ENCODE measurements at regions of chr20 and their contacts with region 1.

Region 1: DNA sequence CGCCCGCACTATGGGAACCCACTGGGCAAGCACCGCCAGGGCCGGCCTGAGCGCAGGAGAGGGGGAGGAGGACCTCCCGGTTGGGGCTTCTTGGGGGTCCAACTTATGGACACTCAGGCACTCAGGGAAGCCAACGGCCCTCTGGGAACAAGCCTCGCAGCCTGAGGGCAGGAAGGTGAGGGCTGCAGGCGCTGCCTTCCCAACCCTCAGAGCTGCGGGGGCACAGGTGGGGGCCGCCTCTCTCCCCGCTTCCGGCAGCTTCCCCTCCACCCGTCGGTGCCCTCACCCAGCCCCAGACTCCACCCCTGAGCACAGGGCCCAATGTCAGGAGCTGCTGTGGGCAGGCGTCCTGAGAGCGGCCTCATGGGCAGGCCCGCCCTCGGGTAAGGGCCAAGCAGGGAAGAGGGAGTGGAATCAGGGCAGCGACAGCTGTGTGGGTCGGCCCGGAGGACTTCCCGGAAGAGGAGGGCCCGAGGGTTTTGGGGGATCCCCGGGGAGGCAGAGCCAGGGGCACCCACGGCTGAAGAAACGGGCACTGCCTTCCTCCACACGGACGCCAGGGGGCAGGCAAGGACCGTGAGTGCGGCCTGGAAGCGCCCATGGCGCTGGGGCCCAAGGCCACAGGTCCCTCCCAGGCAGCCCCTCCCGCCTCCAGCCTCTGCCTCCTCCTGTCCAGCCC is 488 bp upstream of the PTK6 start:
- DNase-seq: peak; percentile 90
- ATAC-seq: peak; percentile 93
- H3K4me3 ChIP-seq: peak overlapping the region; percentile 46 to 70
- H3K27ac ChIP-seq: peak overlapping the region; percentile 88
- H3K4me1 ChIP-seq: peaks cover 17% of the 10 kb centered on the region
- H3K27me3 ChIP-seq: no peaks in the 10 kb centered on the region
- CTCF ChIP-seq: peak; percentile 95

Region 2: GRCh38 chr20:63326897-63327745 is 210.5 kb before region 1 on chr20:
- CTCF ChIA-PET with region 1: no interaction called
- POLR2A ChIA-PET with region 1: no interaction called
- in situ Hi-C with region 1: no loop called
- intact Hi-C with region 1: no loop called
- DNase-seq: no peak
- ATAC-seq: no peak
- H3K4me3 ChIP-seq: no peak overlapping the region
- H3K27ac ChIP-seq: no peak overlapping the region
- H3K4me1 ChIP-seq: no peaks in the 10 kb centered on the region
- H3K27me3 ChIP-seq: no peaks in the 10 kb centered on the region
- CTCF ChIP-seq: no peak

Region 3: DNA sequence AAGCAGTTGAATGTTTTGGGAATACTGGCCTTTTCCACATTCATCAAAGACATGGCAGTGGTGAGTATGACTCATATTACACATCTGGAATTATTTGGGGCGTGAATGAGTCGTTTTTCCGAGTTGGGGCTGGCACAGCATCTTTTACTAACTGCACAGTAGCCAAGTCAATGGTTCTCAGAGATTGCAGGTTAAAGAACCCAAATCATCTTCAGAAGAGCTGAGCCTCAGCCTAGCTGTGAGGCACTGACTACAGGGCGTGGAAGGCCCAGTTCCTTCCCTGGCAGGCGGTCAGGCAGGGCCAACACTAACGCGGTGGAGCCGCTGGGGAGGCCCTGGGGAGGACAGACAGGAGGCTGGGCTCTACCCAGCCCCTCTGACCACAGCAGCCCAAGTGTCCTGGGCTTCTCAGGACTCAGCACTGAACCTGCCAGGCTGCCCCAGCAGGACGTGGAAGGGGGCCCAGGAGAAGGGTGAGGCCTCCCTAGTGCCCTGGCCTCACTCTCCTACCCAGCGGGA is 56.4 kb after region 1 on chr20:
- CTCF ChIA-PET with region 1: interaction called, 5 read pairs
- POLR2A ChIA-PET with region 1: no interaction called
- in situ Hi-C with region 1: loop called (anchors 10 kb)
- intact Hi-C with region 1: no loop called
- DNase-seq: no peak
- ATAC-seq: no peak
- H3K4me3 ChIP-seq: no peak overlapping the region
- H3K27ac ChIP-seq: no peak overlapping the region
- H3K4me1 ChIP-seq: no peaks in the 10 kb centered on the region
- H3K27me3 ChIP-seq: no peaks in the 10 kb centered on the region
- CTCF ChIP-seq: no peak

Region 4: DNA sequence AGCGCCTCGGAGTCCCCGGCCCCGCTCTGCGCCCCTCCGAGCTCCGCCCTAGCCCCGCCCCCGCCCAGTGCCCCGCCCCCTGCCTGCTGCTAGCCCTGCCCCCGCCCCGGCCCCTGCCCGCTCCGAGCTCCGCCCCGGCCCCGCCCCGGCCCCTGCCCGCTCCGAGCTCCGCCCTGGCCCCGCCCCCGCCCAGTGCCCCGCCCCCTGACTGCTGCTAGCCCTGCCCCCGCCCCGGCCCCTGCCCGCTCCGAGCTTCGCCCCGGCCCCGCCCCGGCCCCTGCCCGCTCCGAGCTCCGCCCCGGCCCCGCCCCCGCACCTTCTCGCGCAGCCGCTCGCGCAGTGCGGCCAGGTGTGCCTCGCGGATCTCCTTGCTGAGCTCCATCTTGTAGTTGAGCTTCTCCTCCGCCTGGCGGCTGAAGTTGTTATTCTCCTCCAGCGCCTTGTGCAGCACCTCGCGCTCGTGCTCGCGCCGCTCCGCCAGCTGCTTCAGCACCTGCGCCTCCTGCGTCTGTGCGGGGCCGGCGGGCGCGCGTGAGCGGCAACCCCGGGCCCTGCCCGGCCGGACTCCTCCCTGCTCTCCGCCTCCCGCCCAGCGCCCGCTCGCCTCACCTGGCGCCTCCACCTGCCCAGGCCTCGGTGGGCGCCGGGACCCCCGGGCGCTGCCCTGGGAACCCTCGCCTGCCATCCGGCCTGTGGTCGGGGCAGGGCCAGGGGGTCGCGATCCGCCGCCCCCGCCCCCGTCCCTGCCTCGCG is 104.3 kb after region 1 on chr20:
- CTCF ChIA-PET with region 1: interaction called, 12 read pairs
- POLR2A ChIA-PET with region 1: no interaction called
- in situ Hi-C with region 1: no loop called
- intact Hi-C with region 1: no loop called
- DNase-seq: no peak
- ATAC-seq: peak; percentile 86
- H3K4me3 ChIP-seq: peak overlapping the region; percentile 48 to 54
- H3K27ac ChIP-seq: no peak overlapping the region
- H3K4me1 ChIP-seq: peaks cover 6% of the 10 kb centered on the region
- H3K27me3 ChIP-seq: no peaks in the 10 kb centered on the region
- CTCF ChIP-seq: no peak

Region 5: GRCh38 chr20:63664861-63665716 is 127.4 kb after region 1 on chr20:
- CTCF ChIA-PET with region 1: no interaction called
- POLR2A ChIA-PET with region 1: no interaction called
- in situ Hi-C with region 1: no loop called
- intact Hi-C with region 1: no loop called
- DNase-seq: no peak
- ATAC-seq: peak; percentile 50; the same call in 1 of the 2 replicates
- H3K4me3 ChIP-seq: no peak overlapping the region
- H3K27ac ChIP-seq: no peak overlapping the region
- H3K4me1 ChIP-seq: no peaks in the 10 kb centered on the region
- H3K27me3 ChIP-seq: no peaks in the 10 kb centered on the region
- CTCF ChIP-seq: no peak

Region 6: DNA sequence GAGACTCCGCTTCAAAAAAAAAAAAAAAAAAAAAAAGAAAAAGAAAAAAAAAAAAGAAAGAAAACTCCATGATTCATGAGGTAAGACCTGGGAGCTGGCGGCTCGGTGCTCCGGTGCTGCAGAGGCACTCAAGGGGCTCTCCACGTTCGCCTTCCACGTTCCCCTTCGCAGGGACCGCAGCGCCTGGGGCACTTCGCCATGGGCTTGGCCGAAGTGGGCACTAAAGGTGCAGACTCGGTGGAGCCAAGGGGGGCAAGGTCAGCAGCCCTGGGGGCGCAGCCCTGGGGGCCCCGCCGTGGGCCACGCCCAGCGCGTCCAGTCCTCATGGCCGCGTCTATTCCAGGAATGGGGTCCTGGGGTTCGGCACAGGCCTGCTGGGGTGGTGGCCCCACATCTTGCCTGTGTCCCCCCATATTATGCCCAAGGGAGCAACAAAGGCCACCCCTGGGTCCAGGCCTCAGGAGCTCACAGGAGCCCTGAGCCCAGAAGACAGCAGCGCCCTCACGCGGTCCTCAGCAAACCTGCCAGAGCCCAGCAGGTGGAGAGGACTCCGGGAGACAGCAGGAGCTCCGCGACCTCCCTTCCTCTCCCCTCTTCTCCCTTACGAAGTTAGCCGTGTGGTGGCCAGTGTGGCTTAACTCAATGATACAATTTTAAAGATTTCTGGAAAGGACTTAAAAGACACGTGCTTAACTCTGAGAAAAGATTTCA is 271.5 kb after region 1 on chr20:
- CTCF ChIA-PET with region 1: interaction called, 10 read pairs
- POLR2A ChIA-PET with region 1: no interaction called
- in situ Hi-C with region 1: no loop called
- intact Hi-C with region 1: no loop called
- DNase-seq: no peak
- ATAC-seq: no peak
- H3K4me3 ChIP-seq: no peak overlapping the region
- H3K27ac ChIP-seq: no peak overlapping the region
- H3K4me1 ChIP-seq: no peaks in the 10 kb centered on the region
- H3K27me3 ChIP-seq: no peaks in the 10 kb centered on the region
- CTCF ChIP-seq: no peak

Measured in Panc1 (cell line).